HEK293 (cell line): ENCODE measurements at regions of chr18 and their contacts with region 1.

Region 1: DNA sequence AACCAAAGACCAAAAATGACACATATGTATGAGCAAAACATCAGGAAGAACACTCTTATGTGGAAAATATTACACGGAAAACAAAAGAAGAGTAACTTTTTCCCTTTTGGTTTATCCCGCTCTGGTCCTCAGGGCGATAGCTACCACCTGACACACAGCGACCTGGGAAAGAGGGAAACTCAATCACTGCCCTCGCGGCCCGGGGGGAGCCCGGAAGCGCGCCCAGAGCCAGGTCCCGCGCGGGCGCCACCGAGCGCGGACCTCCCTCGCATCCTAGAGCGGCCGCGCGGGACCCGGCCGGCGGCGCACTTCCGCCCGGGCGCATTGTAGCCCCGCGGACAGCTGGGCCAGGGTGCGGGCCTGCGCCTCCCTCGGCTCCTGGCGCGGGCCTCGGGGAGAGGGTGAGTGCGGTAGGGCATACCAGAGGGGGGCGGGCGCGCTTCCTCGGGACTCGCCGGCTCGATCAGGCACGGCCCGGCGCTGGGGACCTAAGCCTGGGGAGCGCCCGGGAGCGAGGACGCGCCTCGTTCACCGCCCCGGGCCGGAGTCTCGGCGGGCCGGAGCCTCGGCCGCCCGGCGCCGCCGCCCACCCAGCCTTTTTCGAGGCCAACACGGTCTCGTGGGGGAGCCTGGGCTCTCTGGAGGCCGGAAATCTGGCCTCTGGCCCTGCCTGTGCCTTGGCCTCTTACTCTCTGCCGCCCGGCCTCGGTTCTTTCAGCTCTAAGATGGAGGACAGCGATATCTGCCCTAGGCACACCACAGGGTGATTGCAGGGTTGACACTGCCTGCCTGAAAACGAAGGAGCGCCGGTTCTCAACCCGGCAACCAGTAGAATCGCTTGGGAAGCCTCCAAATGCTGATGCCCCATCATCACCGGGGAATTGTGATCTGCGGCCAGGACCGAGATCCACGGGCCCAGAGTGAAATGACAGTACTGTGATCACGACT is at the start of gene ELAC1:
- H3K4me3 ChIP-seq: peak within 1 kb of the TSS; percentile 70
- H3K27ac ChIP-seq: peak within 1 kb of the TSS; percentile 97
- H3K4me1 ChIP-seq: peaks cover 15% of the 10 kb centered on the region
- CTCF ChIP-seq: peak; percentile 54

Region 2: DNA sequence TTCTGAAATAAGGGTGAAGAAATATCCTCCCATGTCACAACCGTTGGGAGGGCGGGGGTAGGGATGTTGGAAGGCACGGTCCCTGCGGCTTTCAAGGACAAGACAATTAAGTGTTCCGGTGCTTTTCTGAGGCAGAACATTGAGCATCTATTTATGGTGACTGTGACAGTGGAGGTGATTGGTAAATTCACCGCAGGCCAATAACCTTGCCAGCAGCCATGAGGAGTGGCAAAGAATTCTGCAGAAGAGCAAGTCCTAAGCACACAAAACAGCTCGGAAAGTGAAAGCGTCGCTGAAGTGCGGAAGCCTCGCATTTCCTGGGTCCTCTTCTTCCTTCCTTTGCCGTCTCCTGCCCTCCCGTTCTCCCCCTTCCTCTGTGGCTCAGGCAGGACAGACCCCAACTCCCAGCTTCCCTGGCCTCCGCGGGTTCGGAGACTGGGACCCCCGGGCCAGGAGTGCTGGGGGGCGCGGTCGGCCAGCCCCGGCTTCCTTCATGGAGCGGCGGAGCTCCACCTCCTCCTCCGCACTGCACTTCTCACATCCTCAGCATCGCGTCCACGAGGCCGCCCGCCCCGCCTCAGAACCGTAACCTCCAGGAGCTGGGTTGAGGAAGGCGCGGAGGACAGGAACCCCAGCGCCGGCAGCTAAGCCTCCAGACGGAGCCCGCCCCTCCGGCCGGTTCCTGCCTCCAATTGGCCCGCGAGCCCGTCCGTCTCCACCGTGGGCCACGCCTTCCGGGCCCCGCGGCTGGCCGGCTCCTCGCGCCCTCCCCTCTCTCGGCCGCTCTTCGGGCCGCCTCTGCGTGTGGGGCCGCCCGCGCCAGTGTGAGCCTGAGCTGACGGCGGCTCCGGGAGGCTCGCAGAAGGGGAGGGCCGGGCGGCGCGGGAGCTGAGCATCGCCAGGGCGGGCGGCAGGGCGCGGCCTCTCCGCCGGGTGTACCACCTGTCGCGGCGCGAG is 89.4 kb before region 1 on chr18 and contains the start of gene ME2:
- CTCF ChIA-PET with region 1: no interaction called
- POLR2A ChIA-PET with region 1: interaction called, 15 read pairs
- H3K4me3 ChIP-seq: peak within 1 kb of the TSS; percentile 58
- H3K27ac ChIP-seq: peak within 1 kb of the TSS; percentile 96
- H3K4me1 ChIP-seq: peaks cover 15% of the 10 kb centered on the region
- CTCF ChIP-seq: no peak; the same call in 1 of the 2 replicates

Region 3: GRCh38 chr18:50950626-50951025 is 17.4 kb before region 1 on chr18:
- CTCF ChIA-PET with region 1: interaction called, 3 read pairs
- POLR2A ChIA-PET with region 1: interaction called, 11 read pairs
- H3K4me3 ChIP-seq: no peak overlapping the region
- H3K27ac ChIP-seq: no peak overlapping the region
- H3K4me1 ChIP-seq: no peaks in the 10 kb centered on the region
- CTCF ChIP-seq: no peak

Region 4: GRCh38 chr18:50986360-50987087 is 18.5 kb after region 1 on chr18:
- CTCF ChIA-PET with region 1: interaction called, 3 read pairs
- POLR2A ChIA-PET with region 1: interaction called, 10 read pairs
- H3K4me3 ChIP-seq: no peak overlapping the region
- H3K27ac ChIP-seq: no peak overlapping the region
- H3K4me1 ChIP-seq: no peaks in the 10 kb centered on the region
- CTCF ChIP-seq: no peak

Region 5: DNA sequence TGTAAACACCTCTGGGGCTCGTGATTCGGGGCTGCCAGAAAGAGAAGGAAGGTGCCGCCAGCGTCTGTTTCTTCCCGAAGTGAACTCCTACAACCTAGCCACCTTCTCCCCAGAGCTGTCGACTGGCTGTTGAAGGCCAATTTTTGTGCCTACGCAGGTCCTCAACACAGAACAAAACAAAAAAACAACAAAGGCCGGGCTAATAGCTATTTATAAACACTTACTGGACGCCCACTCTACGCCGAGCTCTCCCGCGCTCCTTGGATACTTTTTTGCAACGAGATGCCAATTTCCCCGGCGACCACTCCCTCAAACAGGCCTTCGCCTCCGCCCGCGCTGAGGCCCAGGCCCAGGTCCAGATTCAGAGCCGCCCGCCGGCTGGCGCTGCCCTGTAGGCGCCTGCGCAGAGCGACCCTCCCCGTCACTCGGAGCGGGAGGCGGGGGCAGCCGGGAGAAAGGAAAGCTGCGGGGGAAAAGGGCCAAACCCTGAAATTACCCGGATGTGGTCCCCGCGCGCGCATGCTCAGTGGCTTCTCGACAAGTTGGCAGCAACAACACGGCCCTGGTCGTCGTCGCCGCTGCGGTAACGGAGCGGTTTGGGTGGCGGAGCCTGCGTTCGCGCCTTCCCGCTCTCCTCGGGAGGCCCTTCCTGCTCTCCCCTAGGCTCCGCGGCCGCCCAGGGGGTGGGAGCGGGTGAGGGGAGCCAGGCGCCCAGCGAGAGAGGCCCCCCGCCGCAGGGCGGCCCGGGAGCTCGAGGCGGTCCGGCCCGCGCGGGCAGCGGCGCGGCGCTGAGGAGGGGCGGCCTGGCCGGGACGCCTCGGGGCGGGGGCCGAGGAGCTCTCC is 61.9 kb after region 1 on chr18 and contains the start of gene SMAD4:
- CTCF ChIA-PET with region 1: interaction called, 3 read pairs
- POLR2A ChIA-PET with region 1: interaction called, 28 read pairs
- H3K4me3 ChIP-seq: peak within 1 kb of the TSS; percentile 87
- H3K27ac ChIP-seq: peak within 1 kb of the TSS; percentile 100
- H3K4me1 ChIP-seq: peaks cover 23% of the 10 kb centered on the region
- CTCF ChIP-seq: peak; percentile 42; the same call in 1 of the 2 replicates